Activated CD4-positive, alpha-beta memory T cell treated with anti-CD3 and anti-CD28 coated beads for 36 hours (primary cell): ENCODE measurements at regions of chr6 and their contacts with region 1.

Region 1: GRCh38 chr6:25070547-25071366 is 135.0 kb upstream of the RIPOR2 start:
- DNase-seq: peak; percentile 90
- H3K4me3 Mint-ChIP-seq: peak overlapping the region; percentile 44
- H3K27ac Mint-ChIP-seq: peak overlapping the region; percentile 78
- H3K4me1 Mint-ChIP-seq: peaks cover 10% of the 10 kb centered on the region
- H3K27me3 Mint-ChIP-seq: no peaks in the 10 kb centered on the region

Region 2: GRCh38 chr6:23663652-23664051 is 1407.1 kb before region 1 on chr6:
- CTCF ChIA-PET with region 1: no interaction called
- POLR2A ChIA-PET with region 1: no interaction called
- intact Hi-C with region 1: no loop called
- DNase-seq: no peak
- H3K4me3 Mint-ChIP-seq: no peak overlapping the region
- H3K27ac Mint-ChIP-seq: no peak overlapping the region
- H3K4me1 Mint-ChIP-seq: no peaks in the 10 kb centered on the region
- H3K27me3 Mint-ChIP-seq: no peaks in the 10 kb centered on the region

Region 3: DNA sequence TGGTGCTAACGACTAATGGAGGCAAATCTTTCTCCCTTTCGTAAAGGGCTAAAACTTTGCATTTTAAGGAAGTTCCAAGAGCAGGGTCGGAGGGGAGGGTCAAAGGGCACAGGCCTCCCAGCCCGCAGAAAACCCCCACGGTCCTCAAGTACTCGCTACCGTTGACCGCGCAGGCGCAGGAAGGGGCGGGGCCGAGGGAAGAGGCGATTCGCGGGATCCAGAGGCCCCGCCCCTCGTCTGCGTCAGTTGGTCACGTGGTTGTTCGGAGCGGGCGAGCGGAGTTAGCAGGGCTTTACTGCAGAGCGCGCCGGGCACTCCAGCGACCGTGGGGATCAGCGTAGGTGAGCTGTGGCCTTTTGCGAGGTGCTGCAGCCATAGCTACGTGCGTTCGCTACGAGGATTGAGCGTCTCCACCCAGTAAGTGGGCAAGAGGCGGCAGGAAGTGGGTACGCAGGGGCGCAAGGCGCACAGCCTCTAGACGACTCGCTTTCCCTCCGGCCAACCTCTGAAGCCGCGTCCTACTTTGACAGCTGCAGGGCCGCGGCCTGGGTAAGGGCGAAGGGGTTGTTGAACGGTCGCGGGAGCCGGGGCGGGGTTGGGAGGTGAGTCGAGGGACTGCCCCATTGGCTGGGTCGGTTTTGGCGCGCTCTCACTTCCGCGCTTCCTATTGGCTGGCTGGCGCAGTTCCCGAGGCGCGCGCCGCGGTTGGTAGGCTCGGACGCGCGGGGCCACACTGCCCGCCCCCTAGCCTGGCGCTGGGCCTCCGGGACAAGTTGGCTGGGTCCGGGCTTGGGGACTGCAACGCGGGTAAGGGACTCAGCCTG is 295.8 kb before region 1 on chr6 and contains the start of gene GMNN:
- CTCF ChIA-PET with region 1: no interaction called
- POLR2A ChIA-PET with region 1: no interaction called
- intact Hi-C with region 1: loop called (anchors 1 kb)
- DNase-seq: peak; percentile 98
- H3K4me3 Mint-ChIP-seq: peak within 1 kb of the TSS; percentile 99
- H3K27ac Mint-ChIP-seq: peak within 1 kb of the TSS; percentile 100
- H3K4me1 Mint-ChIP-seq: peaks cover 27% of the 10 kb centered on the region
- H3K27me3 Mint-ChIP-seq: no peaks in the 10 kb centered on the region
- total RNA-seq, gene GMNN: 76.5 to 77.4 TPM

Region 4: DNA sequence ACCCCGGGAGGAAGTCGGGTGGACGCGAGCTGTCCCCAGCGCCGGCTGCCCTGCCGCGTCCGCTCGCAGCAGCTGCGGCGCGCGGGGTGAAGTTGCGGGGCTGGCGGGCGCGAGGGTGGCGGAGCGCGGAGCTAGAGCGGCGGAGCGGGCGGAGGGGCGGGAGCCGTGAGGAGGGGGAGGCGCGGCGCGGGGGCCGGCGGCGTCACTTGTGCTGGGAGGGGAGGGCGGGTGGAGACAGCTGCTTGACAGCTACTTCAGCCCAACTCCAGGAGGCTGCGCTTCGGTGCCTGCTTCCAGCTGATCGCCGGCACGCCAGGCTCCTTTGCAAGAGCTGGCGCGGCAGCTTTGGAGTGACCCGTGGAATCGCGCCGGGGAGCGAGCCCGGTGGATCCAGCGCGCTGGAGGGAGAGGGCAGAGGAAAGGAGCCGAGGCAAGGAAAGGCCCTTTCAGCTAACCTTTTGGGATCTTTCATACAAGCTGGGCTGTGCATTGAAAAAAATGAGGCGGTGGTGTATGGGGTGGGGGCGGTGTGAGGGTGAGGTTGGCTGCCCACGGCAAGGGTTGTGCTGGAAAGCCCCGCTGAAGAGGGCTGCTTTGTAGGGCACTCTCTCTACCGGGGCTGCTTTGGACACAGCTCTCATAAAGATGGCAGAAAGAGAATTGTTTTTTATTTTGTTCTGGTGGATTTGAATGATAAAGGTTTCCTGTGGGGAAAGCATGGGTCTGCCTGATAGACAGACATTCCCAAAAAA is 159.6 kb before region 1 on chr6:
- CTCF ChIA-PET with region 1: interaction called, 6 read pairs
- POLR2A ChIA-PET with region 1: no interaction called
- intact Hi-C with region 1: loop called (anchors 5 kb)
- DNase-seq: peak; percentile 70
- H3K4me3 Mint-ChIP-seq: peak overlapping the region; percentile 91
- H3K27ac Mint-ChIP-seq: peak overlapping the region; percentile 95
- H3K4me1 Mint-ChIP-seq: peaks cover 85% of the 10 kb centered on the region
- H3K27me3 Mint-ChIP-seq: no peaks in the 10 kb centered on the region

Region 5: DNA sequence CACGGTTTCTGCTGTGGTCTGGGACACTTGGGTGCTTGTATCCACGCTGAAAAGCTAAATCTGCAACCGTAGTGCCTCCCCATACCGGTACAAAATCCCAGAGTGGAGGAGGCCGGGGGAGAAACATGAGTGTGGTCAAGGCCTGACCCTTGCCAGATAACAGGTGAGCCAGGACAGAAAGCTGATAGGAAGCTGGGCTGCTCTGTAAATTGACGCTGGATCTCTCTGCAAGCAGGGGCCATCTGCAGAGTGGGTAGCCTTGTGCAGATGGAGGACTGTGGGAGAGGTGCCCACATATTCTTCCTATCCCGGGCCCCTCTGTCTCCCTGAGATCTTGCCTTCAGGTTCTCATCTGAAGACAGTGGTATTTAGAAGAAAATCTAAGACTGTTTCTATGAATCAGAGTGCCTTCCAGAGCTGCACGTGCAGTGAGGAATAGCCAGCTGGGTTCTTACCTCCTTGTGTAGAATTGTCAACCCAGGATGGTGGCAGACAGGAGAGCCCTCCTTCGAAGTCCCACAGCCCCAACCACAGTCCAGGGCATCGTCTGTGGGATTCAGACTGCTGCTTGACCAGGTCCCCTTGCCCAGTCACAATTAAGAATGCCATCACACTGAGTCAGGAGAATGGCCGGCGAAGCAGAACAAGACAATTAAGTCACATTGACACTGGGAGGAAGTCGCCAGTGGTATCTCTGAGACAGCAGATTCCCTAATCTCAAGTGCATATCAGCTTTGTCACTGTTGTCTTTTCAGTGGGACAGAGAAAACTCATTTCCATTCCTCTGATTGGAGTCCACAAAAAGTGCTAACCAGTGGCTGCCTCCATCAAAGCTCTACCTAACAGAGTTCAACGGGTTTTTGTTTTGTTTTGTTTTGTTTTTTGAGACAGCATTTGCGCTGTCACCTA is 35.0 kb before region 1 on chr6:
- CTCF ChIA-PET with region 1: interaction called, 20 read pairs
- POLR2A ChIA-PET with region 1: interaction called, 6 read pairs
- intact Hi-C with region 1: no loop called
- DNase-seq: peak; percentile 40
- H3K4me3 Mint-ChIP-seq: peak overlapping the region; percentile 86
- H3K27ac Mint-ChIP-seq: peak overlapping the region; percentile 90
- H3K4me1 Mint-ChIP-seq: peaks cover 60% of the 10 kb centered on the region
- H3K27me3 Mint-ChIP-seq: no peaks in the 10 kb centered on the region

Region 6: DNA sequence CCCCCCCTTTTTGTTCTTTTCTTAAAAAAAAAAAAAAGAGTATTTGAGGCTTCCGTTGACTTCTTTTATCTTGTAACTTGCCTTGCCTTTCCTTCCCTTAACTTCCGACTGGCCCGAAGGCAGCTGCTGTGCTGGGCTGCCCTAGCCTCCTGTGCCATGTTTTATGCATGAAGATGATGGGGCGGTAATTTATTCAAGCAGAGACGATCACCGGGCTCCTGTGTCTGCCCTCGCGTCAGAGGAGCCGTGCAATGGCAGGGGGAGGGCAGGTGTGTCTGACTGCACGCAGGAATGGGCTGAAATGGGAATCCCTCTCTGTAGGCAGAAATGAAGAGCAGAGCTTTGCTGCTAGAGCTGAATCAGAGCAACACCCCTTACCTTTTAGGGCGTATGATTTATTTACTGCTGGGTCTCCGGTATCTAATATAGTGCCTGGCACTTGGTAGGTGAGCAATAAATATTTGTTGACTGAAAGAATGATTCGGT is 28.7 kb before region 1 on chr6:
- CTCF ChIA-PET with region 1: interaction called, 28 read pairs
- POLR2A ChIA-PET with region 1: interaction called, 6 read pairs
- intact Hi-C with region 1: loop called (anchors 1 kb)
- DNase-seq: peak; percentile 69
- H3K4me3 Mint-ChIP-seq: peak overlapping the region; percentile 91
- H3K27ac Mint-ChIP-seq: peak overlapping the region; percentile 97
- H3K4me1 Mint-ChIP-seq: peaks cover 60% of the 10 kb centered on the region
- H3K27me3 Mint-ChIP-seq: no peaks in the 10 kb centered on the region

Region 7: DNA sequence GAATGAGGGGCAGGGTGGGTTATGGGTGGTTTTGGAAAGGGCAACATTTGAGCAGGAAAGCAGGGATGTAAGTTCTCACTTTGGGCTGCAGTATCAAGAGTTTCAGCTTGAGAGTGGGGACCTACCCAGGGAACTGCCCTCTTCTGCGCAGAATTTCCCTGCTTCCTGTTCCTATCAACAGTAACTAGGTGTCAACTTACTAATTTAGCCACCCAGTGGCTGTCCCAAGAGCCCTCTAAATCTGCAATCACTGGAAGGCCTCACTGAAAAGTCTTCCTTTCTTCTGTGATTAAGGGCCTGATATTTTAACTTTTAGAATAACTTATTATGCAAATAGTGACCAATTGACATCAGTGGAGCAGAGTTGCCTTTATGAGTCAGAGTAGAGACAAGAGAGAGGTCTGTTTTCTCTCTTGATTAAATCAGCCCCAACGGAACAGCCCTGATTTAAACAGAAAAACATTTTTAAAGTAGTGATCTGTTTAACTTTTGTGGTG is 16.8 kb before region 1 on chr6:
- CTCF ChIA-PET with region 1: interaction called, 11 read pairs
- POLR2A ChIA-PET with region 1: no interaction called
- intact Hi-C with region 1: no loop called
- DNase-seq: peak; percentile 50
- H3K4me3 Mint-ChIP-seq: peak overlapping the region; percentile 9
- H3K27ac Mint-ChIP-seq: peak overlapping the region; percentile 80
- H3K4me1 Mint-ChIP-seq: peaks cover 82% of the 10 kb centered on the region
- H3K27me3 Mint-ChIP-seq: no peaks in the 10 kb centered on the region

Region 8: GRCh38 chr6:25173951-25174474 is 103.3 kb after region 1 on chr6:
- CTCF ChIA-PET with region 1: interaction called, 4 read pairs
- POLR2A ChIA-PET with region 1: no interaction called
- intact Hi-C with region 1: loop called (anchors 10 kb)
- DNase-seq: no peak
- H3K4me3 Mint-ChIP-seq: no peak overlapping the region
- H3K27ac Mint-ChIP-seq: no peak overlapping the region
- H3K4me1 Mint-ChIP-seq: peaks cover 42% of the 10 kb centered on the region
- H3K27me3 Mint-ChIP-seq: no peaks in the 10 kb centered on the region